ENCODE measurements at regions of chr11 and their contacts with region 1.

Region 1: DNA sequence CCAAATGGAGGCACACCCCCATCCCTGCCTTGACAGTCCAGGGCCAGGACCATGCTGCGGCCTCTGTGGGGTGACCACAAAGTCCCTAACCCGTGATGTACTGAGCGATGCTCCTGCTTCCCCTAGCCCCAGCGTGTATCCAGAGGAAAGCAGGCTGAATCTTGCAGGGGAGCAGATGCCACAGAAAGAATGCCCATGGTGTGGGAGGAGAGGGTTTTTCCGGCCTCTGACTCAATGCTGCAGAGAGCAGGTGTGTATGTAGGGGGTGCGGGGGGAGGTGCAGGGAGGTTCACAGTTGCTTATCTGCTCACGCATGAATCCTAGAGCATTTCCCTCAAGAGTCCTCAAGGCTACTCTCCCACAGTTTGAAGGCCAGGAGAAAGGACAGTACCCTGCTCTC is 130.6 kb downstream of the CEP164 start:
- DNase-seq: no peak
- H3K4me3 ChIP-seq: no peak overlapping the region
- H3K27ac ChIP-seq: no peak overlapping the region
- H3K4me1 ChIP-seq: no peaks in the 10 kb centered on the region
- H3K27me3 ChIP-seq: peaks cover 100% of the 10 kb centered on the region
- CTCF ChIP-seq: no peak

Region 2: DNA sequence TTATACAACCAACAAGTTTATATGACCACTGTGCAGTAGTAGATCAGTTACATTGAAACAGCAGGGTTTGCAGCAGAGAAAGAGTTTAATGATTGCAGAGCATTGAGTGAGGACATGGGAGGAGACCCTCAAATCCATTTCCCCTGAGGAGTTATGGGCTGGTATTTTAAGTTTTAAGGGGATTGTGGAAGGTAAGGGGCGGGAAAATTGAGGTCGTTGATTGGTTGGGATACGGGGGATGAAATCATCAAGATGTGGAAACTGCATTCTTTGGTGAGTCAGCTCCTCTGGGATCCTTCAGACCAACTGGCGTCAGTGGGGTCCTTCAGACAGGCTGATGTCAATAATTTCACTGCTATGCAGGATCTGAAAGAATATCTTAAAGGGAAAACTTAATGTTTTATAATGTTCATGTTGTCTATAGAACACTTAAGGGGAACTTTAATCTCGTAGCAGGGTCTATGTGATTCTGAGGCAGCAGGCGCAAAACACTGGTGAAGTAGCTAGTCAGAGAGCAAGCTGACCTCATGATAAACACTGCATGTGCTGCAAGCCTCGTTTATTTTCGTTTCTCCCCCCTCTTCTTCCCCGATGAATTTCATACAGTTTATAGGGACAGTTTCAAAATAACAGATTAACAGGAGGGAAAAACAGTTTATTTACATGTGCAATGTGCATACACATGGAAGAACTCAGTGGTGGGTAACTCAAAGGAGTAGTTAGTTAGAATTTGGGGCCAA is 184.6 kb before region 1 on chr11:
- CTCF ChIA-PET with region 1: interaction called, 11 read pairs
- POLR2A ChIA-PET with region 1: no interaction called
- intact Hi-C with region 1: no loop called
- DNase-seq: no peak
- H3K4me3 ChIP-seq: no peak overlapping the region
- H3K27ac ChIP-seq: no peak overlapping the region
- H3K4me1 ChIP-seq: no peaks in the 10 kb centered on the region
- H3K27me3 ChIP-seq: no peaks in the 10 kb centered on the region
- CTCF ChIP-seq: no peak

Region 3: DNA sequence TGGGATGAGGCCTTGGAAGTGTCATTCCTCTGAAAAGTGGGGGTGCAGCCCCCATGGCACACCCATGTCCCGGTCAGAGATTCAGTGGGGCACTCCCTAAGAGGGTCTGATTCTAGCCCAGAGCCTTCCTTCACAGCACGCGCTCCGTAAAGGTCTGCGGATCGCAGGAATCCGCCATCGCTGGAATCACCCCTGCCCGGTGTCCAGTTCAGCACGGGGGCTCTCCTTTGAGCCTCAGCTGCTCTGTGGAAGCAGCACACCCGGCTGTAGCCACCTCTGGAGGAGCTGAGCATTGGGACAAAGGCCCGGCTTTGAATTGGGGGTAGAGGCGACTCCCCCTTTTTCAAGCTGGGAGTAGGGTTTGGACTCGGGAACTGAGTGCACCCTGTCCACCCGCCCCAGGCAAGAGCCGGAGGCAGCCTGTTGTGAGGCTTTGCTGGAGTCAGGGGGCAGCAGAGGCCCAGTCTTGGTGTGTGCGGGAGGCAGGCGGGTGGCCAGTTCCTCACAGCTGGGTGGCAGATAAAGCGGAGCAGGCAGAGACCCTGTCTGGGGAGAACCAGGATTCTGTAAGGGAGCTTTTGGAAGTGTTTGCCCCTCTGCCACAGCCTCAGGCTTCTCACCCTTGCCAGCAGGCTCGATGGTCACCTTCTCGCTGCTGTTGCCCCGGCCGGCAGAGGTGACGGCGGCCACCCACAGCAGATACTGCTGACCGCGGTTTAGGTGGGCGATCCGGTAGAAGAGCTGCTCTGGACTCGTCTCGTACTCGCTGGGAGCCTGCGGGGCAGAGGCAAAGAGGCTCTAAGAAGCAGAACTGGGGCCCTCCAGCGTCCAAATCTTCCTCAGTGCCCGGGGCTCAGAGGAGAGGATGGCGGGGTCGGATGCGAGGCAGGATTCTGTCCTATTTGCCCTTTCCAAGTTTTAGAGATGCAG is 14.7 kb before region 1 on chr11:
- CTCF ChIA-PET with region 1: no interaction called
- POLR2A ChIA-PET with region 1: no interaction called
- intact Hi-C with region 1: no loop called
- DNase-seq: peak in 1 of 2 experiments; percentile 28
- H3K4me3 ChIP-seq: no peak overlapping the region
- H3K27ac ChIP-seq: no peak overlapping the region
- H3K4me1 ChIP-seq: no peaks in the 10 kb centered on the region
- H3K27me3 ChIP-seq: peaks cover 97% of the 10 kb centered on the region
- CTCF ChIP-seq: peak; percentile 52

Measured in PC-9 (cell line).